Naive thymus-derived CD4-positive, alpha-beta T cell (primary cell): ENCODE measurements at regions of chr10 and their contacts with region 1.

Region 1: GRCh38 chr10:24503461-24504320 is 220.0 kb downstream of the ARHGAP21 start:
- DNase-seq: peak in 1 of 9 donors; percentile 32
- ATAC-seq: no peak
- H3K4me3 ChIP-seq: no peak overlapping the region
- H3K4me3 Mint-ChIP-seq: no peak overlapping the region
- H3K27ac ChIP-seq: no peak overlapping the region
- H3K27ac Mint-ChIP-seq: no peak overlapping the region
- H3K4me1 ChIP-seq: no peaks in the 10 kb centered on the region
- H3K4me1 Mint-ChIP-seq: no peaks in the 10 kb centered on the region
- H3K27me3 ChIP-seq: no peaks in the 10 kb centered on the region
- H3K27me3 Mint-ChIP-seq: peaks cover 7 to 23% (median 19%) of the 10 kb centered on the region in 5 donors

Region 2: DNA sequence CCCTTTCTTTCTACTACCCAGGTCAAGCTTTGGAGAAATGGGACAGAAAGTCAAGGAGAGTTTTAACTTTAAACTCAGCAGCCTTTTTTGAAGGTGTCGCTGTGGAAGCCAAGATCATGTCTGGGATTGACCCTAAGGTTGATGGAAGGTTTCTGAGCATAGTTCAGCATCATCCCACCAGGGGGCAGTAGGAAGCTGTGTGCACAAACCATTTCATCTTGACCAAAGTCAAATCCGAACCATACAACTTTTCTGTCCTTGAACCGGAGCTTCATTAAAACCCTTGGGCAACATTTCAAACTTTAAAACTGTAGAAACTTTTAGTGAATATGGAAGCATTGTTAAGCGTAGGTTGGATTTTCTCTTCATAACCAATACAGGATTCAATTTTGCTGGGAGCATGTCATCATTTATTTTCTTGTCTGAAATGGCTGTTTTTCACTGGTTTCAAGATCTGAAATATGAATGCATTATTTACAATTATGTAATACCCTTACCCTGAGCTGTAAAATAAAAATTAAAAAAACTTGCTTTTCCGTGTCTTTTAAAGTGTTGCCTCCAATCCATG is 509.1 kb before region 1 on chr10:
- CTCF ChIA-PET with region 1: no interaction called
- POLR2A ChIA-PET with region 1: no interaction called
- intact Hi-C with region 1: loop called in 1 of 2 experiments (anchors 5 kb)
- DNase-seq: peak in 2 of 9 donors; percentile 1 to 33
- ATAC-seq: no peak
- H3K4me3 ChIP-seq: no peak overlapping the region
- H3K4me3 Mint-ChIP-seq: no peak overlapping the region
- H3K27ac ChIP-seq: no peak overlapping the region
- H3K27ac Mint-ChIP-seq: no peak overlapping the region
- H3K4me1 ChIP-seq: no peaks in the 10 kb centered on the region
- H3K4me1 Mint-ChIP-seq: no peaks in the 10 kb centered on the region
- H3K27me3 ChIP-seq: no peaks in the 10 kb centered on the region
- H3K27me3 Mint-ChIP-seq: peaks cover 3 to 7% (median 5%) of the 10 kb centered on the region in 5 donors

Region 3: GRCh38 chr10:24360282-24361127 is 143.2 kb before region 1 on chr10:
- CTCF ChIA-PET with region 1: no interaction called
- POLR2A ChIA-PET with region 1: no interaction called
- intact Hi-C with region 1: loop called in 1 of 2 experiments (anchors 1 kb)
- DNase-seq: peak in 1 of 9 donors; percentile 32
- ATAC-seq: no peak
- H3K4me3 ChIP-seq: no peak overlapping the region
- H3K4me3 Mint-ChIP-seq: no peak overlapping the region
- H3K27ac ChIP-seq: no peak overlapping the region
- H3K27ac Mint-ChIP-seq: peak overlapping the region in 1 of 9 donors; percentile 32
- H3K4me1 ChIP-seq: no peaks in the 10 kb centered on the region
- H3K4me1 Mint-ChIP-seq: no peaks in the 10 kb centered on the region
- H3K27me3 ChIP-seq: no peaks in the 10 kb centered on the region
- H3K27me3 Mint-ChIP-seq: peaks cover 0 to 19% (median 7%) of the 10 kb centered on the region in 5 donors

Region 4: GRCh38 chr10:24383681-24384106 is 120.0 kb before region 1 on chr10:
- CTCF ChIA-PET with region 1: no interaction called
- POLR2A ChIA-PET with region 1: no interaction called
- intact Hi-C with region 1: loop called in 1 of 2 experiments (anchors 5 kb)
- DNase-seq: peak in 1 of 9 donors; percentile 74
- ATAC-seq: no peak
- H3K4me3 ChIP-seq: no peak overlapping the region
- H3K4me3 Mint-ChIP-seq: no peak overlapping the region
- H3K27ac ChIP-seq: no peak overlapping the region
- H3K27ac Mint-ChIP-seq: peak overlapping the region in 1 of 9 donors; percentile 57
- H3K4me1 ChIP-seq: no peaks in the 10 kb centered on the region
- H3K4me1 Mint-ChIP-seq: peaks cover 0 to 11% (median 0%) of the 10 kb centered on the region in 7 donors
- H3K27me3 ChIP-seq: no peaks in the 10 kb centered on the region
- H3K27me3 Mint-ChIP-seq: peaks cover 2 to 40% (median 14%) of the 10 kb centered on the region in 5 donors

Region 5: GRCh38 chr10:24415455-24416125 is 88.1 kb before region 1 on chr10:
- CTCF ChIA-PET with region 1: no interaction called
- POLR2A ChIA-PET with region 1: no interaction called
- intact Hi-C with region 1: loop called in 1 of 2 experiments (anchors 1 kb)
- DNase-seq: no peak
- ATAC-seq: no peak
- H3K4me3 ChIP-seq: no peak overlapping the region
- H3K4me3 Mint-ChIP-seq: no peak overlapping the region
- H3K27ac ChIP-seq: no peak overlapping the region
- H3K27ac Mint-ChIP-seq: no peak overlapping the region
- H3K4me1 ChIP-seq: no peaks in the 10 kb centered on the region
- H3K4me1 Mint-ChIP-seq: no peaks in the 10 kb centered on the region
- H3K27me3 ChIP-seq: no peaks in the 10 kb centered on the region
- H3K27me3 Mint-ChIP-seq: peaks cover 8 to 35% (median 21%) of the 10 kb centered on the region in 5 donors

Region 6: DNA sequence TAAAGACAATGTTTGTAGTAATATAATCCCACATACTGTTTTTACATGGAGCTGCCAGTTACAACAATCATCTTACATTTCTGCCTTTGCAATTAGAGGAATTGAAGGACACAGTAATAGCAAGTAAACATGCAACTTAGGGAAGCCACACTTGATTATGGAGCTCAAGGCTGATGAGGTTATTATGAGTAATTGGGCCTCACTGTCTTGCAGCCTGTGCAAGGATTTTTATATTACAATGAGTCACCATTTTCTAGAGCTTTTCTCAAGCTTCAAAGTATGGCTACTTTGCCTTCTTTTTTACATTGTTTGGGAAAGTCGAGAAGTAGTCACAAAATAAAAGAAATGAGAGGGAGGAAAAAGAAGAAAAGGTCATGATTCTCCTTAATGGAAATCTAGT is 68.3 kb before region 1 on chr10:
- CTCF ChIA-PET with region 1: no interaction called
- POLR2A ChIA-PET with region 1: no interaction called
- intact Hi-C with region 1: loop called in 1 of 2 experiments (anchors 5 kb)
- DNase-seq: no peak
- ATAC-seq: no peak
- H3K4me3 ChIP-seq: no peak overlapping the region
- H3K4me3 Mint-ChIP-seq: no peak overlapping the region
- H3K27ac ChIP-seq: no peak overlapping the region
- H3K27ac Mint-ChIP-seq: no peak overlapping the region
- H3K4me1 ChIP-seq: no peaks in the 10 kb centered on the region
- H3K4me1 Mint-ChIP-seq: no peaks in the 10 kb centered on the region
- H3K27me3 ChIP-seq: no peaks in the 10 kb centered on the region
- H3K27me3 Mint-ChIP-seq: peaks cover 8 to 20% (median 15%) of the 10 kb centered on the region in 5 donors

Region 7: DNA sequence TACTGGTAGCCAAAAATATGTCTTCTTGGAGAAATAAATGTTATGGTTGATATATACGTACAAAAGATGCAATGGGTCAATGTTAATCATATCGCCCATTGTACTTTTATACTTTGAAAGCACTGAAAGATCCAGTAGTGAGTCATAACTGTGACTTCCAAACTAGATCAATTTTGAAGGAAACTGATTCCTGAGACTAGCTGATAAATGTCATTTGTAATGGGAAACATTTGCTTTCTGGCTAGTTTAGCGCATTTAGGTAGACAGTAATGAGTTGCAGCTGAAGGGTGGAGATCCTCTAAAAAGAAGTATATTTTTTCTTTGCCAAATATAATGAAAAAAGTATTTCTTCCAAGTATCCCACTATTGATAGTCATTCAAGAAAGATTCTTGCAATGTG is 273.5 kb after region 1 on chr10:
- CTCF ChIA-PET with region 1: no interaction called
- POLR2A ChIA-PET with region 1: no interaction called
- intact Hi-C with region 1: loop called in 1 of 2 experiments (anchors 5 kb)
- DNase-seq: no peak
- ATAC-seq: no peak
- H3K4me3 ChIP-seq: no peak overlapping the region
- H3K4me3 Mint-ChIP-seq: no peak overlapping the region
- H3K27ac ChIP-seq: no peak overlapping the region
- H3K27ac Mint-ChIP-seq: no peak overlapping the region
- H3K4me1 ChIP-seq: no peaks in the 10 kb centered on the region
- H3K4me1 Mint-ChIP-seq: peaks cover 2 to 19% (median 15%) of the 10 kb centered on the region in 7 donors
- H3K27me3 ChIP-seq: no peaks in the 10 kb centered on the region
- H3K27me3 Mint-ChIP-seq: peaks cover 0 to 2% (median 0%) of the 10 kb centered on the region in 5 donors